Head of caudate nucleus (tissue), 42 donors: ENCODE measurements at regions of chr15 and their contacts with region 1.

Region 1: DNA sequence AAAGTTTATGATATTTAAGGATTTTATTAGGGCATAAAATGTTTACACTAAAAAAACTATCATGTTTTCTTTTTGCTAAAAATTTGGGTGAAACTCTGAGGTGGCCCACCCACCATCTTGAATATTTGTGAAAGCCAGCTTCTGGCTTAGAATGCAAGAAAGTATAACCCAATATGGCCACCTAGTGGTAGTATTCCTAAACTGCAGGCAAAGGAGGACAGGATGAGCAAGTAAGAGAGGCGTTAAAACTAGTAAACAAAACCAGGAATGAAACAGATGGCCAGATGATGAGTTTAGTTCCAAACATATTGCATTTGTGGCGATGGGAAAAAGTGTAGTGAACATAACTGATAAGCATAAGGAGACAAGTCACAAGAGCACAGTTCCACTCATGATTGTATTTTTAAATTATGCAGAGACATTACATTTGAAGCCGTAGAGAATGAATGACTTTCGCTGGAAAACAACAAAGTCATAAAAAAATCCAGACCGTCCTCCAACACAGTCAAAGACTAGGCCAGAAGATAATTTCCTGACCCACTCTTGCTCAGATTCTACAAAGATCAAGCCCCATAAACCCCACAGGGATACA is 103.3 kb upstream of the PRTG start:
- DNase-seq: peak in 18 of 42 donors; percentile 18 to 83 (median 58)

Region 2: GRCh38 chr15:55654561-55655031 is 191.6 kb before region 1 on chr15:
- intact Hi-C with region 1: loop called (anchors 10 kb)
- DNase-seq: no peak

Region 3: DNA sequence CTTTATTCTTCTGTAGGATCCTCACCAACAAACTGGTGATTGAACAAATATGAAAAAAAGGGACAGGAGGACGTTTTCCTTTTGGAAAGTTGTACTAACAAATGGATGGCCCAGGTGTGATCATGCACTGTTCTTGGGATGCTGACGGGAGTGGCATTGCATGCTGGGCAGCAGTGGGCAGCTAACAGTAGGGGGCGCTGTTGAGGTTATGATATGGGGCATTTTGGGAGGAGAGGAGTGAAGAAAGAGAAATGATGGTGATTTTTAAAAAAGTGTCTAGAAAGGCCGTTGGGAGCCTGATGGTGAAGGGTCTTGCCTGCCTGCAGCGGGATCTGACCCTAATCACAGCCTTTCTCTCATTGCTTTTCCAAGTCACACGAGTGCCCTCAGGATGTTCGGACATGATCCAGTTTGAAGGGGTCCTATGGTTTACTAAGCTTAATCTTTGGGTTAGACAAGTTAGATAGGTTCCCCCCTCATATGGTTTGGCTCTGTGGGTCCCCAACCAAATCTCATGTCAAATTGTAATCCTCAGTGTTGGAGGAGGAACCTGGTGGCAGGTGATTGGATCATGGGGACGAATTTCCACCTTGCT is 57.0 kb before region 1 on chr15:
- intact Hi-C with region 1: no loop called
- DNase-seq: peak in 14 of 42 donors; percentile 5 to 71 (median 24)